CD8-positive, alpha-beta T cell (primary cell): ENCODE measurements at regions of chr2 and their contacts with region 1.

Region 1: GRCh38 chr2:171893824-171894611 is at the start of gene SLC25A12:
- DNase-seq: peak; percentile 38 to 87 (median 72)
- ATAC-seq: peak; percentile 93
- H3K4me3 ChIP-seq: peak within 1 kb of the TSS; percentile 76 to 97
- H3K4me3 Mint-ChIP-seq: peak within 1 kb of the TSS; percentile 99
- H3K27ac ChIP-seq: peak within 1 kb of the TSS; percentile 51 to 71
- H3K27ac Mint-ChIP-seq: peak within 1 kb of the TSS; percentile 88
- H3K4me1 ChIP-seq: peaks cover 25% of the 10 kb centered on the region
- H3K4me1 Mint-ChIP-seq: peaks cover 47% of the 10 kb centered on the region
- H3K27me3 ChIP-seq: no peaks in the 10 kb centered on the region
- H3K27me3 Mint-ChIP-seq: no peaks in the 10 kb centered on the region
- CTCF ChIP-seq: no peak
- total RNA-seq, gene SLC25A12: 9.1 to 9.2 TPM

Region 2: DNA sequence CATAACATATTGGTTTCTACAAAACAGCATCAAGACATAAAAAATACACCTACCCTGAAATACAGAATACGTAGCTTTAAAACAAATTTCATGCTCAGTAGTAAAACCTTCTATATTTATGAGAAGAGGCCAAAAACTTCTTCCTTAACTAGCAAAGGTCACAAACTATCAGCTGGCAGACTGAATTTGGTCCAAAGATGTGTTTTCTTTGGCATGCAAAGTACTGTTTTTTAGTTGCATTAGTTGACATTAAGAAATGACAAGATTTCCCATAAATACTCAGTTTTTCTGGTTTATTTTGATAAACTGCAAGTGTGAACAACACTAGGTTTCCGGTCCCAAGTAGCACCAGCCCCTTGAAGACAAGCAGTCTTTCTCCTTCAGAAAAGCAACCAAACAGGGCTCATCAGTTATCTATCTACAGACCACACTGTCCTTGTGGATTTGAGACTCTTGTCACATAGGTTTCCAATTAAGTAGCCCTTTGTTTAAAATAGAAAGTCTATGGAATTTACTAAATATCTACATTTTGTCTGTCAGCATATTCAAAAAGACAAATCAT is 35.5 kb before region 1 on chr2:
- CTCF ChIA-PET with region 1: no interaction called
- POLR2A ChIA-PET with region 1: interaction called, 3 read pairs
- intact Hi-C with region 1: loop called in 1 of 2 experiments (anchors 2 kb)
- DNase-seq: no peak
- ATAC-seq: no peak
- H3K4me3 ChIP-seq: no peak overlapping the region
- H3K4me3 Mint-ChIP-seq: no peak overlapping the region
- H3K27ac ChIP-seq: no peak overlapping the region
- H3K27ac Mint-ChIP-seq: no peak overlapping the region
- H3K4me1 ChIP-seq: no peaks in the 10 kb centered on the region
- H3K4me1 Mint-ChIP-seq: peaks cover 3% of the 10 kb centered on the region
- H3K27me3 ChIP-seq: no peaks in the 10 kb centered on the region
- H3K27me3 Mint-ChIP-seq: no peaks in the 10 kb centered on the region
- CTCF ChIP-seq: no peak

Region 3: GRCh38 chr2:171922230-171923022 is 28.4 kb after region 1 on chr2 and contains the start of gene HAT1:
- CTCF ChIA-PET with region 1: no interaction called
- POLR2A ChIA-PET with region 1: interaction called, 6 read pairs
- intact Hi-C with region 1: loop called (anchors 1 kb)
- DNase-seq: peak; percentile 94 to 99 (median 97)
- ATAC-seq: peak; percentile 98
- H3K4me3 ChIP-seq: peak within 1 kb of the TSS; percentile 82 to 97
- H3K4me3 Mint-ChIP-seq: peak within 1 kb of the TSS; percentile 98
- H3K27ac ChIP-seq: peak within 1 kb of the TSS; percentile 94 to 96
- H3K27ac Mint-ChIP-seq: peak within 1 kb of the TSS; percentile 97
- H3K4me1 ChIP-seq: peaks cover 21% of the 10 kb centered on the region
- H3K4me1 Mint-ChIP-seq: peaks cover 45% of the 10 kb centered on the region
- H3K27me3 ChIP-seq: no peaks in the 10 kb centered on the region
- H3K27me3 Mint-ChIP-seq: no peaks in the 10 kb centered on the region
- CTCF ChIP-seq: no peak
- total RNA-seq, gene HAT1: 29.5 to 30.2 TPM

Region 4: GRCh38 chr2:171999604-172000469 is 105.8 kb after region 1 on chr2 and contains the start of gene METAP1D:
- CTCF ChIA-PET with region 1: no interaction called
- POLR2A ChIA-PET with region 1: no interaction called
- intact Hi-C with region 1: loop called in 1 of 2 experiments (anchors 1 kb)
- DNase-seq: peak; percentile 61 to 91 (median 81)
- ATAC-seq: peak; percentile 87
- H3K4me3 ChIP-seq: peak within 1 kb of the TSS; percentile 85 to 87
- H3K4me3 Mint-ChIP-seq: peak within 1 kb of the TSS; percentile 84
- H3K27ac ChIP-seq: peak within 1 kb of the TSS; percentile 57 to 69
- H3K27ac Mint-ChIP-seq: peak within 1 kb of the TSS; percentile 82
- H3K4me1 ChIP-seq: peaks cover 8% of the 10 kb centered on the region
- H3K4me1 Mint-ChIP-seq: peaks cover 23% of the 10 kb centered on the region
- H3K27me3 ChIP-seq: peaks cover 0 to 4% of the 10 kb centered on the region in 2 experiments
- H3K27me3 Mint-ChIP-seq: peaks cover 8% of the 10 kb centered on the region
- CTCF ChIP-seq: no peak
- total RNA-seq, gene METAP1D: 5.7 to 6.2 TPM